ENCODE measurements at regions of chr16 and their contacts with region 1.

Region 1: DNA sequence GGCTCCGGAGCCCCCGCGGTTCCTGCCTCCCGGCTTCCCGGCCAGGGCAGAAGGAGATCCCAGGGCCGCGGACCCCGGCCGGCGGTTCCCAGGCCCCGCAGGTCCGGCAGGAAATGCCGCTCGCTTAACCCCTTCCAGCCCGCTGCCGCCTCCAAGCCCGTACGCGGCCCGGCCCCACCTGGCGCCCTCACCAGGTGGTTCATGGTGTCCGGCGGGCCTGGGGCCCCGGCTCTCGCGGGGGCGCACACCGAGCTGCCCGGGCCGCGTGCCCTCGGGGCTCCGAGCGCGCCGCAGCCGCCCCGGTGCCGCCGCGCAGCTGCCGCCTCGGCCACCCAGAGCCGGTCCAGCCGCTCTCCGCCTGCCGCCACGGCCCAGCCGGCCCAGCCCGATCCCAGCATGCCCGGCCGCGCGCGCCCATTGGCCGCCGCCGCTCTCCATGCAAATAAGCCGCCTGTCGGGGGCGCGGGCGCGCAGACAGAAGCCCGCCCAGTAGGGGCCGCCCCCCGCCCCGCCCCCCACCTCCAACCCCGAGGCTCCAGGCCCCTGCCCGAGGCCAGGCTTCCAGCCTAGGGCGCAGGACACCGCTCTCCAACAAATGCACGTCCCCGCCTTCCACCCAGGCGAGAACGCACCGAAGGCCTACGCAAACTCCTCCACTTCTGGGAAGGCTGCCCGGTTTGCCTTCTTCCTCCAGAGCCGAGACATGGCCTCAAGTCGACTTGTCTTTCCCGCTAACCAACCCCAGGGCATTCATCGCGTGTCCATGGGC is at the start of gene BCAR1:
- DNase-seq: peak; percentile 81
- H3K4me3 ChIP-seq: peak within 1 kb of the TSS; percentile 79 to 90 (median 88)
- H3K27ac ChIP-seq: peak within 1 kb of the TSS; percentile 71
- H3K4me1 ChIP-seq: peaks cover 81% of the 10 kb centered on the region
- H3K27me3 ChIP-seq: no peaks in the 10 kb centered on the region
- CTCF ChIP-seq: no peak
- total RNA-seq, gene BCAR1: 58.0 to 103 TPM

Region 2: DNA sequence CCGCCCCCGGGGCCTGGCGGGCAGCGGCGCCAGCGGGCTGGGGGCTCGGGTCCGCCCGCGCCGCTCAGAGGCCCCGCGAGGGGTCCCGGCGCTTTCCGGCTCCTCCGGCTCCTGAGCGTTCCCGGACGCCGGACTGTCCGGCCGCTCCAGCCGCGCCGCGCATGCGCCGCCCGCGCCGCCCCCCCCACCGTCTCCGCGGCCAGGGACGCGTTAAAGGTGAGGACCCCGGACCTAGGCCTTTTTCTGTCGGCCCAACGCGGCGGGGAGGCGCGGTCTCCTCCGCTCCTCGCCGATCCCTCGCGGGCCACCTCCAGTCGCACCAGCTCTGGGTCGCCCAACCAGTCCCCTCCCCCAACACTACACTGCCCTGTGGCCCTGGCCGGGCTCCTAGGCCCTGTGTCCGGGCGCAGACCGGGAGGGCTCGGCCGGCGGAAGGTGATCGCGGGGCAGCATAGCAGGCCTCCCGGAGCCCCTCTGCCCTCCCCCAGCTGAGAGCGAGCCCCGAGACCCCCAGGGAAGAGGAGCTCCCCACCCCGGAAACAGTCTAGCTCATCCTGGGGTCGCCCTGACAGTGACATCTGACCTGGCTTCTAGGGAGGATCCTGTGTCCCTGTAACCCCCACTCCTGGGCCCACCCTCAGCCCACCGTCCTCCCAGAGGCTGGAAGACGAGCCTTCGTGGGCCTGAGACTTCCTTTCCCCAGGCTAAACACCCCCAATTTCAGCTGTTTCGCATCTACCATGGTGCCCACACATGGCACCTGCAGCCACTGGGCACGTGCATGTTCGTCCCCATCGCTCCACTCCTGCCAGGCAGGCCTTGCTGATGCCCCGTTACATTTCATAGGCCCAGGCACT is 14.6 kb after region 1 on chr16:
- CTCF ChIA-PET with region 1: interaction called, 5 read pairs
- dilution Hi-C with region 1: no loop called
- in situ Hi-C with region 1: no loop called
- intact Hi-C with region 1: loop called (anchors 1 kb)
- DNase-seq: peak; percentile 53
- H3K4me3 ChIP-seq: peak overlapping the region; percentile 57 to 83 (median 62)
- H3K27ac ChIP-seq: peak overlapping the region; percentile 63
- H3K4me1 ChIP-seq: peaks cover 50% of the 10 kb centered on the region
- H3K27me3 ChIP-seq: no peaks in the 10 kb centered on the region
- CTCF ChIP-seq: no peak

Region 3: GRCh38 chr16:75342308-75342829 is 90.9 kb after region 1 on chr16:
- CTCF ChIA-PET with region 1: no interaction called
- dilution Hi-C with region 1: no loop called
- in situ Hi-C with region 1: no loop called
- intact Hi-C with region 1: no loop called
- DNase-seq: peak; percentile 75
- H3K4me3 ChIP-seq: no peak overlapping the region
- H3K27ac ChIP-seq: no peak overlapping the region
- H3K4me1 ChIP-seq: peaks cover 33% of the 10 kb centered on the region
- H3K27me3 ChIP-seq: no peaks in the 10 kb centered on the region
- CTCF ChIP-seq: no peak

Region 4: GRCh38 chr16:75385507-75386152 is 134.2 kb after region 1 on chr16:
- CTCF ChIA-PET with region 1: no interaction called
- dilution Hi-C with region 1: no loop called
- in situ Hi-C with region 1: loop called in 1 of 2 experiments (anchors 5 kb)
- intact Hi-C with region 1: loop called (anchors 1 kb)
- DNase-seq: peak; percentile 59
- H3K4me3 ChIP-seq: no peak overlapping the region
- H3K27ac ChIP-seq: peak overlapping the region; percentile 60
- H3K4me1 ChIP-seq: peaks cover 16% of the 10 kb centered on the region
- H3K27me3 ChIP-seq: no peaks in the 10 kb centered on the region
- CTCF ChIP-seq: peak; percentile 46 to 50

Measured in mammary epithelial cell (primary cell).